Activated T-helper 1 cell treated with anti-CD3 and anti-CD28 coated beads, Interleukin-12 subunit alpha, Interleukin-12 subunit beta, Interleukin-2, Interleukin-4 antibody, amounts not matched to agents 30 ng/mL and 10 ng/mL and 1 ng/mL, durations not matched to agents 14 hours and 24 hours and 36 hours (primary cell): ENCODE measurements at regions of chrX and their contacts with region 1.

Region 1: GRCh38 chrX:14872851-14873675 is at the starts of genes FANCB and MOSPD2:
- DNase-seq: peak; percentile 93
- H3K4me3 Mint-ChIP-seq: peak within 1 kb of the TSS; percentile 84
- H3K27ac Mint-ChIP-seq: peak within 1 kb of the TSS; percentile 81
- H3K4me1 Mint-ChIP-seq: peaks cover 17% of the 10 kb centered on the region
- H3K27me3 Mint-ChIP-seq: no peaks in the 10 kb centered on the region
- total RNA-seq, gene FANCB: 17.0 and 18.8 TPM in 2 replicates
- total RNA-seq, gene MOSPD2: 14.3 and 15.1 TPM in 2 replicates

Region 2: DNA sequence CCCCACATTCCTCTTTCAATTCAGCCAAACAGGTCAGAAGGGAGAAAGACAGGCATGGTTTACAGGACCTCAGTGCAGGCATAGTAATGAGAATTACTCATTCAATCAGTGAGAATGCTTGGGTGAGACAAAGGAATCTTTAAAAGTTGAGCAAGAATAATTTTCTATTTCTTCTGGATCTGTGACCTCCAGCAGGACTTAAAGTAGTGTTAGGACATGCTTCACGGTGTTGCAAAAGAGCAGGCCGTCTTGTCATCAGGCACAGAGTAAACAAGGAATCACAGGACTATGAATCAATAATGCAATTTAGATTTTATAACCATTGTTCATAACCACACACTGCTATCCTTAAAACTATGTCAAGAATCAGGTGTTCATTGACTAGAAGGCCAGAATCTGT is 474.3 kb before region 1 on chrX:
- intact Hi-C with region 1: no loop called
- DNase-seq: no peak
- H3K4me3 Mint-ChIP-seq: no peak overlapping the region
- H3K27ac Mint-ChIP-seq: no peak overlapping the region
- H3K4me1 Mint-ChIP-seq: no peaks in the 10 kb centered on the region
- H3K27me3 Mint-ChIP-seq: no peaks in the 10 kb centered on the region

Region 3: DNA sequence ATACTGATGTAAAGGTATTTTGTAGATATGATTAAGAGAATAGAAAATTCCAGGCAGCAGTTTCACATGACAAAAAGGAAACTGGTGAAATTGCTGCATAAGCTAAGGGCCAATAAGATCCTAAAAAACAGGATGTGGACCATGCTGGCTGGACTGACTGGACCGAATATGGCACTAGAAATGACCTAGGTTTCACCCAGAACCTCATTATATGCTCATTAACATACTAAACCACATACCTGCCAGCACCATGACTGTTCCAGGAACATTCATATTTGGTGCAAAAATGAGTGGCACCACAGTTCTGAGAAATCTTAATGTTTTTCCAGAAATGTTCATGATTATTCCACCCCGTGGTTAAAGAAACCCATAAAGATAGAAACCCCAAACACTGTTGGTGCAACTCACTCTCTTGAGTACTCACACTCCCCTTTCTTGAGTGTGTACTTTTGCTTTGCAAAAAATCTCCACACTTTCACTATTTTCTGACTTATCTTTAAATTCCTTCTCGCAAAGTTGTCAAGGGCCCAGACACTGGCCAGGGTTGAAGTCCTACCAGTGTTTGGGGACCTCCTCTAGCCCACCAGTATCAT is 74.2 kb before region 1 on chrX:
- intact Hi-C with region 1: loop called (anchors 2 kb)
- DNase-seq: no peak
- H3K4me3 Mint-ChIP-seq: no peak overlapping the region
- H3K27ac Mint-ChIP-seq: peak overlapping the region; percentile 42
- H3K4me1 Mint-ChIP-seq: peaks cover 8% of the 10 kb centered on the region
- H3K27me3 Mint-ChIP-seq: no peaks in the 10 kb centered on the region

Region 4: DNA sequence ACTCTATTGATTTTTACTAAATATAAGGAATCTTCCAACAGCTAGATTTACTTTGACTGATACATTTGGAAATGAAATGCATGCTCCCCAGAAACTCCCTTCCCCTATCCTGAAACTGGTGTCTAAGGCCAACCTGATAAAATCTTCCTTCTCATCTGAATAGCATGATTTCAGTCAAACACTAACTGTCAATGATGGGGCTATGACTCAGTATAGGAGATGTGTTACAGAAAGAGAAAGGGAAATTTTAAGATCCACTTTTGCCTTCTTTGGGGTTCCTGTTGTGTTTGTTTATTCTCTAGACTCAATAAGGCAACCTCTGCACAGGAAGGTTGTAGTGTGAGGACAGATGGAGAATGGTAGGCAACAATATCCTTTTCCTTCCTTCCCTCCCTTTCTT is 160.9 kb after region 1 on chrX:
- intact Hi-C with region 1: loop called (anchors 5 kb)
- DNase-seq: no peak
- H3K4me3 Mint-ChIP-seq: no peak overlapping the region
- H3K27ac Mint-ChIP-seq: peak overlapping the region; percentile 36
- H3K4me1 Mint-ChIP-seq: peaks cover 14% of the 10 kb centered on the region
- H3K27me3 Mint-ChIP-seq: no peaks in the 10 kb centered on the region

Region 5: DNA sequence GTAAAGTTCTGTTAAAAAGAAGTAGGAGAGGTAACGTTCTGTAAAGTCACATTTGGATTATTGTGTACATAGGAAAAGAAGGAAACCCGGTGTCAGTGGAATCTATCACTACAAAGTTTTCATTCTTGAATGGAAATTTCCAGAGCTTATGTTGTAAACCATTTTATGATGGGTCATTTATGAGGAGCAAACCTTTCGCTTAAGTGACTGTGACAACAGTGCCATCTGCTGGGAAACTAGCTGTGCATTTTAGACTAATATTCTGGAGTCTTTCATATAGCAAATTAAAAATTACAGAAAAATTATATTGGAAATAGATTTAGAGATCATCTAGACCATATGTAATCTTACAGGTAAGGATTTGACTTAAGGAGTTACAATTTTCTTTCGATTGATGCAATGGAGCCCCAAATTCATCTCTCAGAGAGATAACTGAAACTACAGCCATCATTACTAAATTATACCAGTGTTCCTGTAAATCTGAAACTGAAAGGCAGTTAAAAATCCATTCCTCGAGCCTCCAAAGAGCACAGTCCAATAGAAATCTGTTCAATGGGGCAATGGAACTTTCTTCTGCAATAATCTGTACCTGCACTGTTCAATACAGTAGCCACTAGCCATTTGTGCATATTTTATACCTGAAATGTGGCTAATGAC is 370.0 kb after region 1 on chrX:
- intact Hi-C with region 1: loop called (anchors 10 kb)
- DNase-seq: no peak
- H3K4me3 Mint-ChIP-seq: no peak overlapping the region
- H3K27ac Mint-ChIP-seq: no peak overlapping the region
- H3K4me1 Mint-ChIP-seq: no peaks in the 10 kb centered on the region
- H3K27me3 Mint-ChIP-seq: no peaks in the 10 kb centered on the region

Region 6: DNA sequence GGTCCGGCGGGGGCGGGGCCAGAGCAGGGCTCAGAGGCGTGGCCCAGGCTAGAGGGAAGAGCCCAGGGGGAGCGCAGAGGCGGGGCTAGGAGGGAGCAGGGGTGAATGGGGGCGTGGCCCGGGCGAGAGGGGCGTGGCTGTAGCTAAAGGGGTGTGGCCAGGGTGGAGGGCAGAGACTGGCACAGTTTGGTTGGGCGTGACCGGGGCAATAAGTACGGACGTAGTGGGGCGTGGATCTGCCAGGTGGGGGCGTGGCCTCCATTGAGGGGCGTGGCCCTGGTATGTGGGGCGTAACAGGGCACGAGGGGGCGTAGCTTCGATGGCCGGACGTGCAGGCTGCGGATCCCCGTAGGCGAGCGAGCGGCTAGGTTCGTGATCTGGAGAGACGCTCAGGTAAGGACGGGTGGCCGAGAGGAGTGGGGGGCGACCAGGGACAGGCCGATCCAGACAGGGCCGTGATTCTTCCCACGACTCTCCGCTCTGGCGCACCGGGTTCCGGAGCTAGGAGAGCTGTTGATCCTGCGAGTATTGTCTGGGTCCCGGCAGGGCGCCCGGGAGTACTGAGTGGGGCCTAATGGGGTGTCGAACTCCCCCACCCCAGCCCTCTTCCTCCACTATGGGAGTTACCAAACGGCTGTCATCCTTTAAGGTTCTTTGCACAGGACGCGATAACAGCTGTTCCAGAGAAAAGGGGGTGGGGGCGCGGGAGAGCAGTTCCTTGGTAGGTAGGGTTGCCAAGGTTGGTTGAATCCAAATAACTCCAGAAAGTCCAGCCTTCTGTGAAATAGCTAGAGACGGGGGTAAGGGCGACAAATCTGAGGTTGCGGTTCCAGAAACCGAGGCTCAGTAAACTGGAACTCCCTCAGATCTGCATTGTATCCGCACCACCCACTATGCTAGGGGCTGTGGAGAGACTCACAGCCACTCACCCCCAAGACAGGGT is 865.2 kb after region 1 on chrX and contains the start of gene CA5B:
- intact Hi-C with region 1: loop called (anchors 1 kb)
- DNase-seq: peak; percentile 93
- H3K4me3 Mint-ChIP-seq: peak within 1 kb of the TSS; percentile 86
- H3K27ac Mint-ChIP-seq: peak within 1 kb of the TSS; percentile 77
- H3K4me1 Mint-ChIP-seq: peaks cover 20% of the 10 kb centered on the region
- H3K27me3 Mint-ChIP-seq: no peaks in the 10 kb centered on the region
- total RNA-seq, gene CA5B: 3.8 and 6.9 TPM in 2 replicates